ENCODE measurements at regions of chr7 and their contacts with region 1.

Region 1: DNA sequence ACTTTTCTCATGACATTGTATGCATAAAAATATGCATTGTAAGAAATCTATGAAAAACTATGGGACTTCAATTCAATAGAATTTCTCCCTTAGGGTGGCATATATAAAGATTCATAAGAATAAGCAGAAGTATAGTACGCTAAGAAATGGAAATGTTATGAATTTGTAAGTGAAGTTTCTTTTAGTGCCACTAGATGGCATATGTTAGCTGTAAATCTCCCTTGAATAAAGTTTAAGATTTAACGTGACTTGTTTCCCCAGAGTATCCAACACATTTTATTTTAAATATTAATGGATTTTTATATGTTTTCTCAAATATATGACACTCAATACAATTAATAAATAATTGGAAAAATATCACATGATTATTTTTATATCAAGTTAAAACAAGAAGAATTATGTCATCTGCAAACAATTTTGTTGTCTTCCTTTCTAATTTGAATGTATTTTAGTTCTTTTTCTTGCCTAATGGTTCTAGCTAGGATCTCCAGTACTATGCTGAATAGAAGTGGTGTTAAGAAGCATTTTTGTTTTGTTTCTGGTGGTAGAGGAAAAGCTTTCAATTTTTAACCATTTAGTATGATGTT is 287.2 kb downstream of the HGF start:
- DNase-seq: peak; percentile 40
- H3K4me3 ChIP-seq: no peak overlapping the region
- H3K27ac ChIP-seq: no peak overlapping the region
- H3K4me1 ChIP-seq: no peaks in the 10 kb centered on the region
- H3K27me3 ChIP-seq: no peaks in the 10 kb centered on the region
- CTCF ChIP-seq: peak; percentile 14 to 27
- POLR2A ChIP-seq: no peak

Region 2: GRCh38 chr7:81956520-81956919 is 473.8 kb after region 1 on chr7:
- CTCF ChIA-PET with region 1: interaction called, 6 read pairs
- POLR2A ChIA-PET with region 1: no interaction called
- dilution Hi-C with region 1: no loop called
- intact Hi-C with region 1: loop called (anchors 1 kb)
- DNase-seq: peak; percentile 52
- H3K4me3 ChIP-seq: no peak overlapping the region
- H3K27ac ChIP-seq: no peak overlapping the region
- H3K4me1 ChIP-seq: no peaks in the 10 kb centered on the region
- H3K27me3 ChIP-seq: no peaks in the 10 kb centered on the region
- CTCF ChIP-seq: peak; percentile 9 to 29
- POLR2A ChIP-seq: no peak

Region 3: DNA sequence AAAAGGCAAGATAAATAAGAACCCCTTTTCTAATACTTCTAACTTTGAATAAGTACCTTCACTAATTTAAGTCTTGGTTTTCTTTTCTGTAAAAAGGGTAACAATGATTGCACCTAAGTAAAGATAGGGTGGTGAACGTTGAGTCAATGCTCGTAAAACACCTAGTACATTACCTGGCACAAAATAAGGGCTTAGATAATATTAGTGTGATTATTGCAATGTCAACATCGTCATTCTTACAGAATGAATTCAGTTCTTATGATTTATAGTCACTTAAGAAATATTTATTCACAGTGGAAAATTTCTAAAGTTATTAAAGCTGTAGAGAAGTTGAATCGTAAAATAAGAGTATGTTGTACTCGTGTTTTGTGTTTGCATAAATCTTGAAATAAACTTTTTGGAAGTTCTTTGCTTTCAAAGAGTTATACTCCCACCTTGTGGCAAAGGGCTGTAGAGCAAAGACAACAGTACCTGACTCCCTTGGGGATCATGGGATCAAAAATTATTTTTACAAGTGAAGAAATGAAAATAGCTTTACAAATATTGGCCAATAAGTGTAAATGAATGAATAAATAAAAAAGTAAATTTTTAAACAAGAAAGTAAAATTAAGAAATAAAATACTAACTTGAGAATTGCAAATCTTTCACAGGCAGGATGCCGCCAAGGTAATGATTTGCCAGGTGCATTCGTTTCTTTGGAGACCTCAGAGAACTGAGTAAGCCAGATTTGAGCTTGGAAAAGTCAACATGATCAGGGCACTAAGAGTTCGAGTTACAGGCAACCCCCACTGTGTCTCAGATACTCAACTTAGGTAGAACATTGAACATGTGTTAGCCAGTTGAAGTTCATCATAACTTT is 1246.7 kb after region 1 on chr7:
- CTCF ChIA-PET with region 1: interaction called, 19 read pairs
- POLR2A ChIA-PET with region 1: no interaction called
- dilution Hi-C with region 1: no loop called
- intact Hi-C with region 1: loop called (anchors 1 kb)
- DNase-seq: peak; percentile 60
- H3K4me3 ChIP-seq: no peak overlapping the region
- H3K27ac ChIP-seq: no peak overlapping the region
- H3K4me1 ChIP-seq: no peaks in the 10 kb centered on the region
- H3K27me3 ChIP-seq: no peaks in the 10 kb centered on the region
- CTCF ChIP-seq: peak; percentile 48 to 62
- POLR2A ChIP-seq: no peak

Measured in endothelial cell of umbilical vein (primary cell).